PC-9 (cell line): ENCODE measurements at regions of chr19 and their contacts with region 1.

Region 1: DNA sequence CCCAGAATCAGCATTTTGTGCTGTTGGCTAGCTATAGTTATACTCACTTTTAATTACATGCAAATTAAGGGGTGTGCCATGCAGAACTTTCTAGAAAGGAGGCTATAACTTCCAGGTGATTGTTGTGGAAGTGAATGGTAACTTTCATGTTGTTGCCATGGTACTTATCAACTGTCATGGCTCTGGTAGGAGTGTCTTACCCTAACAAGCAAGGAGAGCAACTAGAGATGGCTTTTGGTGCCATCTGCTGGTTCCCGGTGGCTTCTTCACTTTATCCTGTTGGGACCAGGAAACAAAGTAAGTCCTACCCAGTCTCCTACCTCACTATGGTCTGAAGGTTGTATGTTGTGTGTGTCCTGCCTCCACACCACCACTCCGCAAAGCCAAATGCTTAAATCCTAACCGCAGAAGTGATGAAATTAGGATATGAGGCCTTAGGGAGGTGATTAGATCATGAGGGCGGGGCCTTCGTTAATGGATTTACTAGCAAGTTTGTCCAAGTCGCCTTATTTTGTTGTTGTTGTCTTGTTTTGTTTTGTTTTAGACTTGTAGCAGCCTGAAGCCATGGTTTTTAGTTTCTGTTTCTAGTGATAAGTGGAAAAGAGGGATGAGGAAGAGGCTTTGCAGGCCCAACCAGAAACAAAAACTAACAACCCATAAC is 22.6 kb downstream of the FBXL12 start:
- DNase-seq: peak; percentile 75 to 93
- H3K4me3 ChIP-seq: no peak overlapping the region
- H3K27ac ChIP-seq: no peak overlapping the region
- H3K4me1 ChIP-seq: peaks cover 31% of the 10 kb centered on the region
- H3K27me3 ChIP-seq: no peaks in the 10 kb centered on the region
- CTCF ChIP-seq: peak; percentile 90

Region 2: GRCh38 chr19:9205501-9206113 is 590.6 kb before region 1 on chr19:
- CTCF ChIA-PET with region 1: no interaction called
- POLR2A ChIA-PET with region 1: no interaction called
- intact Hi-C with region 1: loop called (anchors 5 kb)
- DNase-seq: peak in 1 of 2 experiments; percentile 64
- H3K4me3 ChIP-seq: no peak overlapping the region
- H3K27ac ChIP-seq: no peak overlapping the region
- H3K4me1 ChIP-seq: no peaks in the 10 kb centered on the region
- H3K27me3 ChIP-seq: peaks cover 73% of the 10 kb centered on the region
- CTCF ChIP-seq: peak; percentile 94

Region 3: GRCh38 chr19:9584073-9584833 is 212.0 kb before region 1 on chr19 and contains the start of gene ZNF121:
- CTCF ChIA-PET with region 1: interaction called, 4 read pairs
- POLR2A ChIA-PET with region 1: no interaction called
- intact Hi-C with region 1: loop called (anchors 1 kb)
- DNase-seq: peak; percentile 76
- H3K4me3 ChIP-seq: peak within 1 kb of the TSS; percentile 78
- H3K27ac ChIP-seq: peak within 1 kb of the TSS; percentile 76
- H3K4me1 ChIP-seq: 0 out of 2 replicates have a peak, but pooled peaks cover 5% of the 10 kb centered on the region
- H3K27me3 ChIP-seq: no peaks in the 10 kb centered on the region
- CTCF ChIP-seq: no peak
- total RNA-seq, gene ZNF121: 36.6 and 51.3 TPM in 2 replicates

Region 4: GRCh38 chr19:9641810-9642209 is 154.4 kb before region 1 on chr19:
- CTCF ChIA-PET with region 1: no interaction called
- POLR2A ChIA-PET with region 1: no interaction called
- intact Hi-C with region 1: no loop called
- DNase-seq: no peak
- H3K4me3 ChIP-seq: no peak overlapping the region
- H3K27ac ChIP-seq: no peak overlapping the region
- H3K4me1 ChIP-seq: peaks cover 17% of the 10 kb centered on the region
- H3K27me3 ChIP-seq: no peaks in the 10 kb centered on the region
- CTCF ChIP-seq: no peak

Region 5: GRCh38 chr19:9818734-9819589 is 22.7 kb after region 1 on chr19 and contains the start of gene FBXL12:
- CTCF ChIA-PET with region 1: no interaction called
- POLR2A ChIA-PET with region 1: no interaction called
- intact Hi-C with region 1: loop called (anchors 1 kb)
- DNase-seq: peak; percentile 98 to 100
- H3K4me3 ChIP-seq: peak within 1 kb of the TSS; percentile 93
- H3K27ac ChIP-seq: peak within 1 kb of the TSS; percentile 82
- H3K4me1 ChIP-seq: peaks cover 15% of the 10 kb centered on the region
- H3K27me3 ChIP-seq: no peaks in the 10 kb centered on the region
- CTCF ChIP-seq: no peak
- total RNA-seq, gene FBXL12: 30.7 and 35.8 TPM in 2 replicates

Region 6: DNA sequence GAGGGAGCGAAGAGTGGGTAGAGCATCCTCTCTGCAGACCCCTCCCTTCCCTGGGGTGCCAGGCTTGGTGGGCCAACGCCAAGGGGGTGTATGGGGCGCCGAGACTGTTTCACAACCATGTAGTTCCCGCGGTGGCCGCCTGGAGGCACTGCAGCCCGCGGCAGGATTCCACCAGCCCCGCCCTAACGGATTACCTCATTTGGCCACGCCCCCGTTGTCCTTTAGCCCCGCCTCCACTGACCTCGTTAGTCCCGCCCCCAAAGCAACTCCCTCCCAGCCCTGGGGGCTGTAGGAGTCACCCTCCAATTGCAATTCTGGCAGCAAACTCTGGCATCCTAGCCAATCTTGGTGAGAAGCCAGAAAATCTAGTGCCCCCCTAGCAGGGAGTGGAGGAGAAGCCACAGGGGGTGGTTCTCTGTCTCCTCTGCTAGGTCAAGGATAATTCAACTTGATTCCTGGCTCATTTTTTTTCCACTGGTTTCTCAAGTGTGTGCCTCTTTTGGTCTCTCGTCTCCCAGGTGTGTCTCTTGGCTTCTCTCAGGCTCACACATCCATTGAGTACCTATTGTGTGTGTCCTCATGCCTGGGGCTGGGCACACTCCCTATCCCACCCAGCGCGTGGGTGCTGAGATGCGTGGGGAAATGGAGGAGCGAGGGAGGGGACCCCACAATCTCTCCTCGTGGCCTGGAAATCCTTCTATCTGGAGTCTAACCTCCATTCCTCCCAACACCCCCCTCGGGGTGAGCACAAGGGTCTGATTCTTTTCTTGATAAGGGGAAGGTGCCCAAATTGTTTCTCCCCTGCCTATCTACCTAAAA is 138.1 kb after region 1 on chr19:
- CTCF ChIA-PET with region 1: no interaction called
- POLR2A ChIA-PET with region 1: no interaction called
- intact Hi-C with region 1: no loop called
- DNase-seq: peak; percentile 50 to 74
- H3K4me3 ChIP-seq: no peak overlapping the region
- H3K27ac ChIP-seq: no peak overlapping the region
- H3K4me1 ChIP-seq: no peaks in the 10 kb centered on the region
- H3K27me3 ChIP-seq: peaks cover 13% of the 10 kb centered on the region; the same call in 1 of the 2 replicates
- CTCF ChIP-seq: peak; percentile 99

Region 7: GRCh38 chr19:9945319-9945966 is 149.2 kb after region 1 on chr19:
- CTCF ChIA-PET with region 1: no interaction called
- POLR2A ChIA-PET with region 1: no interaction called
- intact Hi-C with region 1: no loop called
- DNase-seq: no peak
- H3K4me3 ChIP-seq: no peak overlapping the region
- H3K27ac ChIP-seq: no peak overlapping the region
- H3K4me1 ChIP-seq: no peaks in the 10 kb centered on the region
- H3K27me3 ChIP-seq: peaks cover 29% of the 10 kb centered on the region; the same call in 1 of the 2 replicates
- CTCF ChIP-seq: no peak